CD4-positive, alpha-beta T cell (primary cell): ENCODE measurements at regions of chr16 and their contacts with region 1.

Region 1: DNA sequence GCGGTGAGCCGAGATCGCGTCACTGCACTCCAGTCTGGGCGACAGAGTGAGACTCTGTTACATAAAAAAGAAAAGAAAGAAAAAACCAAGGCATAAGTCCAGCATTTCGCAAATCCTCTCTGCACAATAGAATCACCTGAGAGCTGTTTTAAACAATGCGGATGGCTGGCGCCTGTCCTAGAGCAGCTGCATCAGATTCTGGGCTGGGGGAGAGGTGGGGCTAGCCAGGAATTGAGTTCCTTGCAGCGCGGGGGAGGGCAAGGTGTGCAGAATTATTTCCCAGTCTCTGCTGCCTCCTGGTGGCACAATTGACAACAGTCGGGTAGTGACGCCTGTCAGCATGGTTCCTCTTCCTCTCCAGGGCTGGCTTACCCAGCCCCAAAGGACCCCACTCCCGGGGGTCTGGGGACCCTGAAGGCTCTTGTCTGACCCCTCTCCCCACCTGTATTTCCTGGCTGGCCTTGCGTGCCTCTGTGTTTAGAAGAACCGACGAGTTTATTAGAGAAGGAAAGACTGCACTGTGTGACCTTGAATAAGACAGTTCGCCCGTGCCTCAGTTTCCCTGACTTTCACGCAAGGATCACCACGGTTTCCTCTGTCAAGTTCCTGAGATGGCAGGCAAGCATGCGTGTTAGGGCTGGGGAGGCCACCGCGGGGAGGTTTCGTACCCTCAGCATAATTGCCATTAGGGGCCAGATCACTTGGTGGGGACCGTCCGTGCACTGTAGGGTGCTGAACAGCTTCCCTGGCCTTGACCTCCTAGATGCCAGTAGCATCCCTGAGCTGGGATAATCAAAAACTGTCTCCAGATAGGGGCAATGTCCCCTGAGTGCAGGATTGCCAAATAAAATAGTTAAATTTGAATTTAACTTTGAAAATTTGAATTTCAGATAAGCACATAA is 41.0 kb upstream of the PLCG2 start:
- DNase-seq: peak; percentile 78 to 93 (median 85)
- ATAC-seq: peak; percentile 98
- H3K4me3 ChIP-seq: peak overlapping the region; percentile 29
- H3K4me3 Mint-ChIP-seq: peak overlapping the region; percentile 72
- H3K27ac ChIP-seq: no peak overlapping the region
- H3K27ac Mint-ChIP-seq: peak overlapping the region; percentile 47
- H3K4me1 ChIP-seq: peaks cover 24% of the 10 kb centered on the region
- H3K4me1 Mint-ChIP-seq: peaks cover 8% of the 10 kb centered on the region
- H3K27me3 ChIP-seq: no peaks in the 10 kb centered on the region
- H3K27me3 Mint-ChIP-seq: no peaks in the 10 kb centered on the region
- CTCF ChIP-seq: peak; percentile 91

Region 2: DNA sequence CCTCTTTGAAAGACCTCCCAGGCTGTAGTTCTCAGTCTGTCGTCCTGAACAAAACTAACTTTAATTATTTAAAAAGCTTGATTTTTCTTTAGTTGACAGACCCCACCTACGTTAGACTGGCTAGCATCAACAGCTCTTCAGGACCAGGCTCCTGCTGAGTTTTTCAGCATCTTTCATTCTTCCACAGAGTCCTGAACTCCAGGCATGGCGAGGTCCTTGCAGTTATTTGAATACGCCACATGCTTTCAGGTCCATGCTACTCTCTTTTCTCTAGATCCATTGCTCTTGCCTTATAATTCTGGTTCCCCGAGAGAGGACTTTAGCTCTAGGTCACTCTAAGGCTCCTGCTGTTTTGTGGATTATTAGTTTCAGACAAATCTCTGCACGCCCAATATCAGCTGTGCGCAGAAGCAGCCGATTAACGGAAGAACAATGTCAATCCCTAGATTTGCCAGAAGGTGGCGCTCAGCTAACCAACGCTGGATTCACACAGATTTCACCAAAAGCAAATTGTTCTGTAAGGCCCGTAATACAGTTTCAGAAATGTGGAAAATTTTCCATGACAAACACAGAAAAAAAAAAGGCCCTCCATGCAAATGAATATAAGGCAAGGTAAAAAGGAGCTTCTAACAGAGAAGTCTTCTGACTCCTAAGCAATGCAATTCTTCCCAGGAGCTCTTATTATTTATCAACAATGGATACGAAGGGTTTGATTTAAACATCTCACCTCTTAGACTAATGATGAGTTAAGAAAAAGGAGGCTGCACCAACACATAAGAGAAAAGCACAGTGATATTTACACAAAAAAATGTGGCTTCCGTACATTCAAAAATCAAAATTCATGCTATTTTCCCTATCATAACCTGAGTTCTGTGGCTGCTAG is 533.1 kb before region 1 on chr16:
- CTCF ChIA-PET with region 1: interaction called, 5 read pairs
- POLR2A ChIA-PET with region 1: interaction called, 3 read pairs
- intact Hi-C with region 1: loop called (anchors 1 kb)
- DNase-seq: peak; percentile 5 to 70 (median 22)
- ATAC-seq: no peak
- H3K4me3 ChIP-seq: no peak overlapping the region
- H3K4me3 Mint-ChIP-seq: no peak overlapping the region
- H3K27ac ChIP-seq: no peak overlapping the region
- H3K27ac Mint-ChIP-seq: no peak overlapping the region
- H3K4me1 ChIP-seq: no peaks in the 10 kb centered on the region
- H3K4me1 Mint-ChIP-seq: no peaks in the 10 kb centered on the region
- H3K27me3 ChIP-seq: peaks cover 0 to 3% of the 10 kb centered on the region in 2 experiments
- H3K27me3 Mint-ChIP-seq: peaks cover 32% of the 10 kb centered on the region
- CTCF ChIP-seq: peak; percentile 95

Region 3: DNA sequence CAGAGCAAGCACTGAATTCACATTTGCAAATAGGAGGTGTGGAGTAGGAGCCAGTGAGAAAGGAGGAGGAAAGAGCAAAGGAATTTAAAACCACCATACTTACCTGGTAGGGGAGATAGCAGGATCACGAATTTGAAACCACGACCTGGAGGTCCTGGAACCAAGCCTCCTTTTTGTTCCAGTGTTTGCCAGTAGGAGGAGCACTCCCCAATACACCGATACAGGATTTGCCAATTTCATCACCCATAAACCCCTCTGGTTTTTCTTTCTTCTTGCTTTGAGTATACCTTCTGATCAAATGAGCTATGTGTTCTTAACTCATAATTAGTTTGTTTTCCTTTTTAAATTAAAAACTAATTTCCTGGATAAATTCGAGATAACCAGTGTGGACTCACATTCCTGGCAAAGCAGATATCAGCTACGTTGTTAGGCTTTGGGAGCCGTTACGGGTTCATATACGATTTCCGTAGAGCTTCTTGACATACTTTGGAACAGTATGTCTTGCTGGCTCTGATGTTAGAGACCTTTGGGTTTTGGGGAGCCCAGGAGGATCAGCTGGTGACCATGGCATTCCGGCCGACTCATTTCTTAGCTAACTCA is 477.0 kb before region 1 on chr16:
- CTCF ChIA-PET with region 1: no interaction called
- POLR2A ChIA-PET with region 1: no interaction called
- intact Hi-C with region 1: loop called in 1 of 2 experiments (anchors 5 kb)
- DNase-seq: peak in 4 of 14 experiments; percentile 17 to 48 (median 35)
- ATAC-seq: no peak
- H3K4me3 ChIP-seq: no peak overlapping the region
- H3K4me3 Mint-ChIP-seq: no peak overlapping the region
- H3K27ac ChIP-seq: no peak overlapping the region
- H3K27ac Mint-ChIP-seq: no peak overlapping the region
- H3K4me1 ChIP-seq: no peaks in the 10 kb centered on the region
- H3K4me1 Mint-ChIP-seq: no peaks in the 10 kb centered on the region
- H3K27me3 ChIP-seq: no peaks in the 10 kb centered on the region
- H3K27me3 Mint-ChIP-seq: no peaks in the 10 kb centered on the region
- CTCF ChIP-seq: peak; percentile 58